PC-3 (cell line): ENCODE measurements at regions of chr6 and their contacts with region 1.

Region 1: DNA sequence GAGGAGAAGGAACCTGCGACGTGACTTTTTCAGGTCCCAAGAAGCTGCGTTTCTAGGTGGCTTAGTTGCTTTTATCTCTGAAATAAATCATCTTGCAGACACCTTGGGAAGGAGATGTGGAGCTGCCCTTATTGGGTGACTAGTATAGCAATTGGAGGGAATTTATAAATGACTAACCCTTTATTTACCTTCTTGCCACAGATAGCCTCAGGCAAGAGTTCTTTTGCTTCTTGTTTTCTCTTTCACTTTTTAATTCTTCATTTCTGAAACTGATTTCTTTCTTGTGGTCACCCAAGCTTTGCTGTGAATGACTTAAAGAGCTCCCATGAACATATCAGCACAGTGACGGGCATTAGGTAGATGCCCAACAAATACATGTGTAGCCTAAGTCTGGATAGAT is 3.0 kb downstream of the ADGRF4 start:
- DNase-seq: peak; percentile 90
- ATAC-seq: peak; percentile 54
- H3K4me3 ChIP-seq: peak overlapping the region; percentile 31; the same call in 1 of the 2 replicates
- H3K27ac ChIP-seq: peak overlapping the region; percentile 95
- H3K4me1 ChIP-seq: peaks cover 50% of the 10 kb centered on the region
- H3K27me3 ChIP-seq: no peaks in the 10 kb centered on the region
- CTCF ChIP-seq: no peak

Region 2: DNA sequence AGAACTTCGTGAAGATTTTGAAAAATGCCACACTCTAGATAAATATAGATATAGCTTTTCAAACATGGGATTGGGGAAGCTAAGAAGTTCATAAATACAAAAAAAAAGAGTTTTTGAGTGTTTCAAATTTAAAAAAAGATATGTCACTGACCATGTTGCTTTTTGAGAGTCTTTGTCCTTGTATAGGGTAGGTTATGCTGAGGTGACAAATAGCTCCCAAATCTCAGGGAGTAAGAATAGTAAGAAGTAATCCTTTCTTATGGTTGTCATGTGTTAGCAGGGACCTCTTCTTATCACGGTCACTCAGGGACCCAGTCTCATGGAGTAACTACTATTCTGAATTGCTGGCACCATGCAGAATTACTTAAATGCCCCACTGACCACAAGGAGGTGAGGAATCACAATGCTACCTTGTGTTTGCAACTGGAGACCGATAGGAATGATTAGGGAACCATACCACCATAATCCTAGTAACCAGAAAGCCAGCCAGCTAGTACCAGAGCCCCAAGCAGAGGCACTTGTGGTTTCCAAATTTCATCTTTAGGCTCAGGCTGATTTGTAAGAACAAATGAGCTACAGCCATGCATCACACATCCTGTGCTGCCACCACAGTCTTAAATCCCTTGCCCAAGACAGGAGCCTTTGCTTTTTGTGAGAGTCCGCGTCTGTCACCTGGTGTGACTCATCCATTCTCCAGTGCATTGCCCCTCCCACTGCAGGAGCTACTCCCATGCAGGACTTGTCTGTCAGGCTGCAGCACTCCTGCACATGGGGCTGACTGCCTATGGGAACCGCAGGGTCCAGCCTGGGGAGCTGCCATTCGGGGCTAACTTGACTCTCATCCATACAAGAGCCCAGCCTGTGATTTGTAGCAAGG is 45.4 kb before region 1 on chr6:
- CTCF ChIA-PET with region 1: no interaction called
- POLR2A ChIA-PET with region 1: no interaction called
- intact Hi-C with region 1: loop called (anchors 5 kb)
- DNase-seq: peak; percentile 91
- ATAC-seq: peak; percentile 97
- H3K4me3 ChIP-seq: no peak overlapping the region
- H3K27ac ChIP-seq: peak overlapping the region; percentile 57
- H3K4me1 ChIP-seq: peaks cover 40% of the 10 kb centered on the region
- H3K27me3 ChIP-seq: no peaks in the 10 kb centered on the region
- CTCF ChIP-seq: no peak